IMR-90 (cell line): ENCODE measurements at regions of chr10 and their contacts with region 1.

Region 1: DNA sequence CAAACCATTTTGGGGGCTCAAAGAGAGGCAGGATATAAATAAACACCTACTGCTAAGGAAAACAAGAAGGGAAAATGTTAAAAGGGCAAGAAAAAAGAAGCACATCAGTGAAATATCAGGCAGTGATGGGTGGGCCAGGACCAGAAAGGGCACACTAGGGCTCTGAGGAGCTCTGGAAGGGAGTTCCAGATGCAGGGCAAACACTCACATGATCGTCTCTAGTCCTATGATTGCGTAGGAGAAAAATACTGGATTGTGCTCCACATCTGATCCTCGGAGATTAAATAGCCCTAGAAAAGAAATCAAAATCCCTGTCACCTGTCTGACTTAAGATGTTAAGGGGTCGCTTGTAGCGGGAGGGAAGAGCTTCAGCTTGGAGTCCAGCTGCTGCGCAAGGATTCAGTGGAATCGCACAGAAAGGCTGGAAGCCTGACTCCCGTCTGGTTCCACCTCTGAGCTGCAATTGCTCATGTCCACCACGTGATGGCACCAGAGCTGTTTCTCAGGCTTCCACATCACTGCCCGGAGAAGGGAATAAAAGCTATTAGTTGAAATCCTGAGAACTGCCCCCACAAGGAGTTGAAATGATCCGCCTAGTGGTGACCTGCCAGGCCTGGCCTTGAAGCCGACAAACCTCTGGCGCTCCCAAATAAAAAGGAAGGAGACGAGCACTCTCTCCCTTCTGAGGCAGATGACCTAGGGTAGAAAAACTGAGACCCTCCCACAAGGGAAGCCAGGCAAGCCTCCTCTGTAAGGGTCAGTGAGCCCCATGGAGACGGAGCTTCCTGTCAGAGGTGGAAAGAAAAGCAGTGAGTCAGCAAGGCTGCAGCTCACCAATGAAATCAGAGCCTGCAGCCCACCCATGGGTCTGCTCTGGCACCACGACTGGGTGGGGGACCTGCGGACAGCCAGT is 39.2 kb downstream of the XPNPEP1 start:
- DNase-seq: peak; percentile 90
- ATAC-seq: peak; percentile 95
- H3K4me3 ChIP-seq: no peak overlapping the region
- H3K27ac ChIP-seq: peak overlapping the region; percentile 62
- H3K4me1 ChIP-seq: peaks cover 15% of the 10 kb centered on the region
- H3K27me3 ChIP-seq: no peaks in the 10 kb centered on the region
- CTCF ChIP-seq: peak; percentile 99
- POLR2A ChIP-seq: peak; percentile 59; the same call in 1 of the 2 replicates
- RAD21 ChIP-seq: peak; percentile 99

Region 2: GRCh38 chr10:109894516-109894915 is 10.4 kb after region 1 on chr10:
- CTCF ChIA-PET with region 1: interaction called, 20 read pairs
- POLR2A ChIA-PET with region 1: no interaction called
- dilution Hi-C with region 1: no loop called
- in situ Hi-C with region 1: no loop called
- intact Hi-C with region 1: no loop called
- DNase-seq: peak; percentile 88
- ATAC-seq: peak; percentile 25
- H3K4me3 ChIP-seq: no peak overlapping the region
- H3K27ac ChIP-seq: no peak overlapping the region; the same call in 1 of the 2 replicates
- H3K4me1 ChIP-seq: peaks cover 26% of the 10 kb centered on the region
- H3K27me3 ChIP-seq: no peaks in the 10 kb centered on the region
- CTCF ChIP-seq: no peak
- POLR2A ChIP-seq: no peak
- RAD21 ChIP-seq: no peak

Region 3: GRCh38 chr10:109992485-109992884 is 108.4 kb after region 1 on chr10:
- CTCF ChIA-PET with region 1: interaction called, 10 read pairs
- POLR2A ChIA-PET with region 1: no interaction called
- dilution Hi-C with region 1: no loop called
- in situ Hi-C with region 1: no loop called
- intact Hi-C with region 1: no loop called
- DNase-seq: peak; percentile 86
- ATAC-seq: peak; percentile 92
- H3K4me3 ChIP-seq: no peak overlapping the region
- H3K27ac ChIP-seq: peak overlapping the region; percentile 57; the same call in 1 of the 2 replicates
- H3K4me1 ChIP-seq: peaks cover 10% of the 10 kb centered on the region
- H3K27me3 ChIP-seq: no peaks in the 10 kb centered on the region
- CTCF ChIP-seq: no peak
- POLR2A ChIP-seq: no peak
- RAD21 ChIP-seq: no peak

Region 4: DNA sequence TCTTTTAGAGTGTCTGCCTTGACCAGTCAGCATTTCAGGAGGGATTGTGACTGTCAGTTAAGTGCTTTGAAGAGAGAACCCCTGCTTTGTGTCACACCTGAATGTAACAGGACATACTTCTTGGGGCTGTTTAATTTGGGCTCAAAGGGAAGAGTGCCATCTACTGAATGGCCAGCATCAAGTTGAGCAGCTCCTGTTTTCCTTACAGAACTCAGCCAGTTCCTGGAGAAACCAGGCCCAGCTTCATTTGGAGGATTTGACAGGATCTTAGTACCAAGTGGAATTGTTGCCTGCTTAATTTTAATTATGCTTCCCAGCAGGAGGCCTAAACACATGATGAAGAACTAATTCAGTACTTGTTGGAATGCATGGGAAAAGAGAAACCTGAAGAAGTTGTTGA is 131.9 kb after region 1 on chr10:
- CTCF ChIA-PET with region 1: interaction called, 17 read pairs
- POLR2A ChIA-PET with region 1: no interaction called
- dilution Hi-C with region 1: no loop called
- in situ Hi-C with region 1: no loop called
- intact Hi-C with region 1: no loop called
- DNase-seq: peak; percentile 28
- ATAC-seq: no peak
- H3K4me3 ChIP-seq: no peak overlapping the region
- H3K27ac ChIP-seq: no peak overlapping the region
- H3K4me1 ChIP-seq: peaks cover 5% of the 10 kb centered on the region
- H3K27me3 ChIP-seq: no peaks in the 10 kb centered on the region
- CTCF ChIP-seq: peak; percentile 34; the same call in 1 of the 2 replicates
- POLR2A ChIP-seq: no peak
- RAD21 ChIP-seq: peak; percentile 29; the same call in 1 of the 2 replicates

Region 5: GRCh38 chr10:110225756-110226542 is 341.8 kb after region 1 on chr10:
- CTCF ChIA-PET with region 1: no interaction called
- POLR2A ChIA-PET with region 1: no interaction called
- dilution Hi-C with region 1: no loop called
- in situ Hi-C with region 1: no loop called
- intact Hi-C with region 1: loop called (anchors 5 kb)
- DNase-seq: peak; percentile 93
- ATAC-seq: peak; percentile 81
- H3K4me3 ChIP-seq: peak overlapping the region; percentile 90
- H3K27ac ChIP-seq: peak overlapping the region; percentile 96
- H3K4me1 ChIP-seq: peaks cover 6% of the 10 kb centered on the region
- H3K27me3 ChIP-seq: no peaks in the 10 kb centered on the region
- CTCF ChIP-seq: peak; percentile 72
- POLR2A ChIP-seq: no peak
- RAD21 ChIP-seq: peak; percentile 64

Region 6: DNA sequence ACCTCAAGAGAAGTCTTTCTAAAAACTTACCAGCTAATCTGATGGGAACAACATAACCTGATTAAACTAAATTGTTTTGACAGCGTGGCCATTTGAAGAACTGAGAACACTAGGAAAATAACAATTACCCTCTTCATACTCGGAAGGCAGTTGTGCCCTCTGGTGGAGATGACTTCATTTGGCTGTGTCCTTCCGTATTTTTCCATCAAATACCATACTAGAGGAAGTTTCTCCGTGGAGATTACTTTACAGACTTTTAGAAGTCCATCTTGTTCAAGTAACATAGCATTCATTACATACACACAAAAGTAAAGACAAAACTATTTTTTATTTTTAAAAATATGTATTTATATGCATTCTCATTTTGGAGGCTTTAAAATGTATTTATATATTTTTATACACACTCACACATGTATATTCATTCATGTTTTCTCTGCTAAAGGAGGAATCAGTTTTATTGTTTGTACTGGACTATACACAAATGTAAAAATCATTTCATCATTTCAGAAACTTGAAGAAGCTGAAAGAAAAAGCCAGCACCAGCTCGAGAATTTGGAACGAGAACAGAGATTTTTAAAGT is 395.4 kb after region 1 on chr10:
- CTCF ChIA-PET with region 1: interaction called, 6 read pairs
- POLR2A ChIA-PET with region 1: no interaction called
- dilution Hi-C with region 1: no loop called
- in situ Hi-C with region 1: loop called (anchors 5 kb)
- intact Hi-C with region 1: loop called (anchors 1 kb)
- DNase-seq: peak; percentile 71
- ATAC-seq: peak; percentile 94
- H3K4me3 ChIP-seq: no peak overlapping the region
- H3K27ac ChIP-seq: no peak overlapping the region
- H3K4me1 ChIP-seq: peaks cover 1% of the 10 kb centered on the region; the same call in 1 of the 2 replicates
- H3K27me3 ChIP-seq: no peaks in the 10 kb centered on the region
- CTCF ChIP-seq: peak; percentile 84
- POLR2A ChIP-seq: no peak
- RAD21 ChIP-seq: peak; percentile 92

Region 7: DNA sequence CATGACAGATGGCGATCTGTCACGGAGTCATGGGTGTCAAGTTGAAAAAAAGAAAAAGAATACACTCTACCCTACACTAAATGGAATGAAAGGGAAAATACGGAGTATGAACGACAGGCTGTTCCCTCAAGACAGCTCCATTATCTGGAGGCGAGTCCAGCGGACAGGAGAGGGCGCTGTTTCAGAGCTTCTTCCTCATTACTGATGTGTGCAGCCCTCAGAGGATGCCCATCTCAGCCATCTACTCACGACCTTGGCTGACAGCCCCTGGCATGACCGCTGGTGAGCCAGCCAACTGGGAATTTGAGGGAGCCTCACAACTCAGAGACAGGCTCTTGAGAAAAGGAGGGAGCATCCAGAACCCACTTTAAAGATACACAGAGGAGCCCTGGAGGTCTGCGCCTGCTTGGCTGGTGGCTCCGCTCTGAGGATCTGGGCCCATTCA is 470.2 kb after region 1 on chr10:
- CTCF ChIA-PET with region 1: no interaction called
- POLR2A ChIA-PET with region 1: no interaction called
- dilution Hi-C with region 1: no loop called
- in situ Hi-C with region 1: no loop called
- intact Hi-C with region 1: no loop called
- DNase-seq: peak; percentile 90
- ATAC-seq: peak; percentile 45
- H3K4me3 ChIP-seq: no peak overlapping the region; the same call in 1 of the 2 replicates
- H3K27ac ChIP-seq: peak overlapping the region; percentile 59
- H3K4me1 ChIP-seq: peaks cover 37% of the 10 kb centered on the region
- H3K27me3 ChIP-seq: no peaks in the 10 kb centered on the region
- CTCF ChIP-seq: peak; percentile 92
- POLR2A ChIP-seq: no peak; the same call in 1 of the 2 replicates
- RAD21 ChIP-seq: peak; percentile 86